ENCODE measurements at regions of chr9 and their contacts with region 1.

Region 1: DNA sequence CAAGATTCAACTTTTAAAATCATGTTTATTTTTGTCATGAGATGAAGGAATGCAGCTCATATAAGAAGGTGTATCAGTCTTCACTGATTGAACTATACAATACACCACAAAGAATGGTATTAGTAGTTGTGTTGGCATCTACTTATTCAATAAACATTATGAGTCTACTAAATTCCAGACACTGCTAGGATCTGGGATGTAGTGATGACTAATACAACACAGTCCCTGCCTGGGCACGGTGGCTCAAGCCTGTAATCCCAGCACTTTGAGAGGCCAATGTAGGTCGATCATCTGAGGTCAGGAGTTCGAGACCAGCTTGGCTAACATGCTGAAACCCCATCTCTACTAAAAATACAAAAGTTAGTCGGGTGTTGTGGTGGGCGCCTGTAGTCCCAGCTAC is 171.4 kb upstream of the NFIB start:
- DNase-seq: no peak
- ATAC-seq: no peak
- H3K4me3 ChIP-seq: no peak overlapping the region
- H3K27ac ChIP-seq: no peak overlapping the region
- H3K4me1 ChIP-seq: no peaks in the 10 kb centered on the region
- H3K27me3 ChIP-seq: no peaks in the 10 kb centered on the region
- CTCF ChIP-seq: no peak
- EP300 ChIP-seq: no peak
- POLR2A ChIP-seq: no peak
- RAD21 ChIP-seq: no peak

Region 2: DNA sequence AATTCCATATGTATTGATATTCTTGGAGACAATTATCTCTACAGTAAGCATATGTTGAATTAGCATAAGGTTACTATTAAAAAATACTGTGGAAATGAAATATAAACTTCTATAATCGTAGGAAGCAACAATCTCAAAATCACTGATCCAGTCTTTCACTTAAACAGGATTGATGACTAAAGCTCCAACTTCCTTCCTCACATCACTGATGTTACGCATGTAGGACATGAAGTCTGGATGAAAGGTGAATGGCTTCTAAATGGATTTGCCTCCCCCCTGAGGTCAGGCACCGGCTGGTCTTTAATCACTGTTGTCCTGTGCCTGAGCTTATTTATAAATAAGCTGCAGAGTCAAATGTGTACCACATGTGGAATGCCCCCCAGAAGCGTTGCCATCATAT is 14.3 kb before region 1 on chr9:
- CTCF ChIA-PET with region 1: no interaction called
- POLR2A ChIA-PET with region 1: no interaction called
- RAD21 ChIA-PET with region 1: no interaction called
- SMC1A ChIA-PET with region 1: no interaction called
- in situ Hi-C with region 1: no loop called
- intact Hi-C with region 1: no loop called
- DNase-seq: no peak
- ATAC-seq: no peak
- H3K4me3 ChIP-seq: no peak overlapping the region
- H3K27ac ChIP-seq: no peak overlapping the region
- H3K4me1 ChIP-seq: no peaks in the 10 kb centered on the region
- H3K27me3 ChIP-seq: no peaks in the 10 kb centered on the region; a peak in 1 of 4 replicates
- CTCF ChIP-seq: no peak
- EP300 ChIP-seq: no peak
- POLR2A ChIP-seq: no peak
- RAD21 ChIP-seq: no peak

Region 3: GRCh38 chr9:14532716-14533115 is 47.4 kb after region 1 on chr9:
- CTCF ChIA-PET with region 1: no interaction called
- POLR2A ChIA-PET with region 1: no interaction called
- RAD21 ChIA-PET with region 1: no interaction called
- SMC1A ChIA-PET with region 1: no interaction called
- in situ Hi-C with region 1: no loop called
- intact Hi-C with region 1: loop called (anchors 5 kb)
- DNase-seq: no peak
- ATAC-seq: no peak
- H3K4me3 ChIP-seq: no peak overlapping the region
- H3K27ac ChIP-seq: no peak overlapping the region
- H3K4me1 ChIP-seq: no peaks in the 10 kb centered on the region
- H3K27me3 ChIP-seq: no peaks in the 10 kb centered on the region
- CTCF ChIP-seq: no peak
- EP300 ChIP-seq: no peak
- POLR2A ChIP-seq: no peak
- RAD21 ChIP-seq: no peak

Measured in GM12878 (cell line).